Vagina (tissue), 2 donors: ENCODE measurements at regions of chr2 and their contacts with region 1.

Region 1: GRCh38 chr2:237315170-237315828 is 98.7 kb downstream of the COL6A3 start:
- DNase-seq: no peak
- H3K4me3 ChIP-seq: no peak overlapping the region
- H3K27ac ChIP-seq: peak overlapping the region; percentile 96
- H3K4me1 ChIP-seq: peaks cover 51% of the 10 kb centered on the region
- H3K27me3 ChIP-seq: no peaks in the 10 kb centered on the region
- CTCF ChIP-seq: no peak
- POLR2A ChIP-seq: peak in 1 of 2 donors; percentile 14

Region 2: DNA sequence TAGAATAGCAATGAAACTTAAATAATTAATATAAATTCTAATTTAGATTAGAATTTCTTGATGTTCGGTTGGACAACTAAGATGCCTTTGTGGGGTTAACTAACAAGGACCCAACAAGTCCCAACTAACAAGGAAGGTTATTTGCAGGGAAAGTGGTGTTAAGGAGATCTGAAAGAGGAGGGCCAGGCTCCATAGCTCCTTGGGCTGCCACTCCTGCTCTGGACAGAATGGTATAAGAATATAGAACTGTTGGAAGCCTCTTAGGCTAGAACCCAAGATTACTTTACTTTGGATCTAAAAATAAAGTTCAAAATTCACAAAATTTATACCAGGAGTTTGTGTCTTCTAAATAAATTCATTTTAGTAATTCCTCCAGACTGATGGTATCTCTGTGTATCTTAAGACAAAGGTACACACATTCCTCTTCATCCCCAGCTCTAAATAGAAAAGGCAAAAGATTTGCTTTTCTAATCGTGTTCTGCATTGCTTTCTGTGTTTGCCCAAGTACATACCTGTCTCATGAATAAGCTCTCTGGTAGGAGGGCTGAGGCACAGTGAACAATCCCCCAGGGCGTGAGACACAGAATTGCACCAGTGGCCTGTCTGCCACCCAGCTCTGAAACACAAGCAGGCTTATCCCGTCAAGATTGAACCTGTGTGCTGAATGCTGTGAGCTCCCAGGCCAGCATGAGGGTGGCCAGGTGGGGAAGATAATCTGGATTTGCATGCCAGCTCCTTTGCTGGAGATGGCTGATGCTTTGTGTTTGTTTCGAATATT is 569.7 kb before region 1 on chr2:
- intact Hi-C with region 1: no loop called
- DNase-seq: peak in 1 of 2 donors; percentile 20
- H3K4me3 ChIP-seq: no peak overlapping the region
- H3K27ac ChIP-seq: peak overlapping the region; percentile 10
- H3K4me1 ChIP-seq: peaks cover 48% of the 10 kb centered on the region
- H3K27me3 ChIP-seq: no peaks in the 10 kb centered on the region
- CTCF ChIP-seq: no peak
- POLR2A ChIP-seq: no peak

Region 3: DNA sequence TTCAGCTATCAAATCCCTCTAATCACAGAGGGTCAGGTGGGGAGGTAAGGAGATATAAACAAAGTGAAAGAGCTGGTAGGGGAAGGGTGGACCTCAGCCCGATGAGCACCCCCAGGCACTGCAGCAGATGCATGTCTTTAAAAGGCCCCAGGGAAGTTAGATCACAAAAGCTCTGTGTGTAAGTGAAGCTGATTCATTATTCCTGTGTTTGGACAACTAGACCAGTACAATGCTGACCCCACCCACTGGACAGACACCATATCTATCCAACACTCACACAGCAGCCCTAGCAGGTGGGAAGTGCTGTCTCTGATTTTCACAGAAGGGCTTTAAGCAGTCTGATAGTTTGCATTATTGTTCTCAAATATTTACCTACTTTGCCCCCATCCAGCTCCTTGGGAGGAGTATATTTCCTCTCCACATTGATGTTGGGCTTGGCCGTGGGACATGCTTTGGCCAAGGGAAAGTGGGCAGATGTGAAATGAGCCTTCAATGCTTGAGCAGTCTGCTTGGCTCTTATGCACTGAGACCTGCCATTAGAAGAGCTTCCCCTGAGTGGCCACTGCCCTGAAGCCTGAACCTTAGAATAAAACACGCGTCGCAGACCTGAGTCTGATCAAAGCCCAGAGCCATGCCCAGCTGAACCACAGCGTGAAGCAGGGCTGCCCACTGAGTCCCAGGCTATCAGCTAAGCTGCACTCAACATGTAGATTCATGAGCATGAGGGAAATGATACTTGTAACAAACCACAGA is 118.3 kb before region 1 on chr2:
- intact Hi-C with region 1: loop called (anchors 10 kb)
- DNase-seq: peak in 1 of 2 donors; percentile 84
- H3K4me3 ChIP-seq: no peak overlapping the region
- H3K27ac ChIP-seq: peak overlapping the region; percentile 79
- H3K4me1 ChIP-seq: peaks cover 34% of the 10 kb centered on the region
- H3K27me3 ChIP-seq: no peaks in the 10 kb centered on the region
- CTCF ChIP-seq: no peak
- POLR2A ChIP-seq: no peak

Region 4: DNA sequence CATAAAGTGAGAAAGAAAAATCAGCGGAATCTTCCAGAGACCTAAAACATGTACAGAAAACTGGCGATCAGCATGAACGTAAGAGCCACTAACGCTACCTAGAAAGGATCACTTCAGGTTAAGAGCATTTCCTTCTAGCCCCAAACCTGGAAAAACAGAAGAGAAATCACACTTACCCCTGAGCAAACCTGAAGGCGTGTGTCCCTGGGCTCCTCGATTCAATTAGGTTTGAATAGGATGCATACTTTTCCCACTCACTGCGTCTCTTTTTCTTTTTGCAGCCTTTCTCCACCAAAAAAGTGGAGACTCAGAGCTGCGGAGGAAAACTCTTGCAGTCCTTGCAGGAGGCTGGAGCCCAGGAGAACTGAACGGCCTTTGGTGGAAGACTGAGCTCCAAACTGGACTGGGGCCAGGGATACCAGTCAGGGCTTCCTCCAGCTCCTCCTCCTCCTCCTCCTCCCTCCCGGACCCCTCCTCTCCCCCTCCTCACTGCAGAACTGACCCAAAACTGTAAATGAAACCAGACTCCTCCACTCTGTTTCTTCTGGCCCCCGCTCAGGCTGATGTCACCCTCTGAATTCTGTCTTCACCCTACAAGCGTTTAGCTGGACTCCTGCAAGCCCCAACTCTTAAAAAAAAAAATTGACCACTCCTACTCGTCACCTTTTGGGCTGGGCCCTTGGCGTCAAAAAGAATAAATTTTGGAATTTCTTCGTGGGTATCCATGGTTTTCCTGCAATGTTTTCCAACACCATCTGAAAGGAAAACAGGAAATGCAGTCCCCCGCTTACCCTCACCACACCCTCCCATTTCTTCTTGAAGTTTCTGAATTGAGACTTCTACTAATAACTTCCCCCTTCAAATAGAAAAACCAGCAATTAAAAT is 98.7 kb after region 1 on chr2 and contains the start of gene COL6A3:
- intact Hi-C with region 1: loop called (anchors 2 kb)
- DNase-seq: peak in 1 of 2 donors; percentile 97
- H3K4me3 ChIP-seq: peak within 1 kb of the TSS; percentile 65 to 71
- H3K27ac ChIP-seq: peak within 1 kb of the TSS; percentile 98
- H3K4me1 ChIP-seq: peaks cover 7% of the 10 kb centered on the region
- H3K27me3 ChIP-seq: no peaks in the 10 kb centered on the region
- CTCF ChIP-seq: no peak
- POLR2A ChIP-seq: peak in 1 of 2 donors; percentile 78
- total RNA-seq, gene COL6A3: 315 TPM